ENCODE measurements at regions of chr12 and their contacts with region 1.

Region 1: DNA sequence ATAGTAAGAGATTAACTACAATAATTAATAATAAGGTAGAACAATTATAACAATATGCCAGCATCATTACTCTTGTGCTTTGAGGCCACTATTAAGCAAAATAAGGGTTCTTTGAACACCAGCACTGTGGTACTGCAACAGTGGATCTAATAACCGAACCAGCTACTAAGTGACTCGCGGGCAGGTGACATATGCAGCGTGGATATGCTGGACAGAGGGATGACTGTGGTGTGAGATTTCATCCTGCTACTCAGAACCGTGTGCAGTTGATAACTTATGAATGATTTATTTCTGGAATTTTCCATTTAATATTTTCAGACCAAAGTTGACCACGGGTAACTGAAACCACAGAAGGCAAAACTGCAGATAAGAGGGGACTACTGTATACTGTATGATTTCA is 34.4 kb downstream of the BMAL2 start:
- DNase-seq: no peak
- H3K4me3 ChIP-seq: no peak overlapping the region
- H3K4me3 Mint-ChIP-seq: no peak overlapping the region
- H3K27ac ChIP-seq: no peak overlapping the region
- H3K27ac Mint-ChIP-seq: no peak overlapping the region
- H3K4me1 ChIP-seq: no peaks in the 10 kb centered on the region
- H3K4me1 Mint-ChIP-seq: no peaks in the 10 kb centered on the region
- H3K27me3 ChIP-seq: no peaks in the 10 kb centered on the region
- H3K27me3 Mint-ChIP-seq: peaks cover 0 to 7% of the 10 kb centered on the region in 2 donors

Region 2: DNA sequence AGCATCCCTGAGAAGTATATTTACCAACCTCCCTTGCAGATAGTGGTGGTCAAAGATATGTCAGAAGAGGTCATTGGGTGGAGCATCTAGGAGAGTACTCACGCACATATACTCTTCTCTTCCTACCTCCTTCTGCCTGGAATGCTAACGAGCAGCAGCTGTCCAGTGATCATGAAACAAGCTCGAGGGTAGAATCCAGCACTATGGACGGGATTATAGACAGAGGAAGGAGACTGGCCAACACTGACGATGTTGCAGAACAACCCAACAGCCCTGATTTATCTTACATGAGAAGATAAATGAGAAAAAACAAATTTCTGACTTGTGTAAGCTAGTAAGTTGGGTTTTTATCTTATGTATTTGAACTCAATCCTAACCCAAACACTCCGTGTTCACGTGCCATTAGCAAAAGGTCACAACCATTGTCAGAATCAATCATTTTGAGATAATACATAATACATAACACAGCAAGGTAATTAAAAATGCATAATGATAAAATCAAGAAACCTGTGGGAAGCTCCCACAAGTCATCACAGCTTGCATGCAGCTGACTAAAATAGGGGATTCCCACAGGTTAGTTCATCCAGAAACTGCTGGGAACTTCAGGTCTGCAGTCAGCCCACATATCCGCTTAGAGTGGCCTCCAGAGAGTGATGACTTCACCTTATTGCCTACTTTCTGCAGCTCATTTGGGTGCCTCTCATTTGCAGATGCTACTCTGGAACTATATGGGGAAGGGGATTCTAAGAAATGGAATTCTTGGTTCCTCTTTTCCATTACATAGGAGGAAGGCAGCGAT is 159.3 kb before region 1 on chr12:
- CTCF ChIA-PET with region 1: no interaction called
- POLR2A ChIA-PET with region 1: no interaction called
- intact Hi-C with region 1: no loop called
- DNase-seq: no peak
- H3K4me3 ChIP-seq: no peak overlapping the region
- H3K4me3 Mint-ChIP-seq: no peak overlapping the region
- H3K27ac ChIP-seq: no peak overlapping the region
- H3K27ac Mint-ChIP-seq: no peak overlapping the region
- H3K4me1 ChIP-seq: peaks cover 4% of the 10 kb centered on the region
- H3K4me1 Mint-ChIP-seq: peaks cover 0 to 5% (median 0%) of the 10 kb centered on the region in 4 donors
- H3K27me3 ChIP-seq: no peaks in the 10 kb centered on the region
- H3K27me3 Mint-ChIP-seq: no peaks in the 10 kb centered on the region

Region 3: DNA sequence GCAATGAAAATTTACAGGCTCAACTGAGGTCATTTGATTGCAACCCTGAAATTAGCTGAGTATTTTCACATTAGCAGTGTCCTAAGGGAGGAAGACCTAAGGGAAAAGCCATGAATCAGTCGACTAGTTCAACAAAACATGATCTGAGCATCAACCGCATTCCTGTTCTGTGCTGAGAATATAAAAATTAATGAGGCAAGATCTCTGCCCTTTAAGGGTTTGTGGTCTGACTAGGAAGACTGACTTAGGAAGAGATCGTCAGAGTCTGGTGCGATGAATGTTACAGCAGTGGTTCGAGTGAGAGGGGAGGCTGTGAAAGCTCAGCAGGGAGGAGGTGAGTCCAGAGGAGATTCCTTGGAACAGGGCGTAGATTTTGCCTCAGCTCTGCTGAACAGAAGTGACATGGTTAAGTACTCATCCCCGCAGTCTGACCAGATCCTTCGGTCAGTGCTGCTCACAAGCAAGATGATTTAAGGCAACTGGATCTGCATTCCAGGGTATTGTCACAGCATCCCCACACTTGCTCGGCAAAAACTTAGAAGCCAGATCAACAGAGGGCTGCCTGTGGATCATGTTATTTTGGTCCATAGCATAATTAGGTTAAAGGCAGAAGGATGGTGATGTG is 15.2 kb after region 1 on chr12:
- CTCF ChIA-PET with region 1: interaction called, 19 read pairs
- POLR2A ChIA-PET with region 1: no interaction called
- intact Hi-C with region 1: no loop called
- DNase-seq: no peak
- H3K4me3 ChIP-seq: no peak overlapping the region
- H3K4me3 Mint-ChIP-seq: no peak overlapping the region
- H3K27ac ChIP-seq: no peak overlapping the region
- H3K27ac Mint-ChIP-seq: no peak overlapping the region
- H3K4me1 ChIP-seq: no peaks in the 10 kb centered on the region
- H3K4me1 Mint-ChIP-seq: no peaks in the 10 kb centered on the region
- H3K27me3 ChIP-seq: no peaks in the 10 kb centered on the region
- H3K27me3 Mint-ChIP-seq: no peaks in the 10 kb centered on the region